GM12878 (cell line): ENCODE measurements at regions of chr7 and their contacts with region 1.

Region 1: DNA sequence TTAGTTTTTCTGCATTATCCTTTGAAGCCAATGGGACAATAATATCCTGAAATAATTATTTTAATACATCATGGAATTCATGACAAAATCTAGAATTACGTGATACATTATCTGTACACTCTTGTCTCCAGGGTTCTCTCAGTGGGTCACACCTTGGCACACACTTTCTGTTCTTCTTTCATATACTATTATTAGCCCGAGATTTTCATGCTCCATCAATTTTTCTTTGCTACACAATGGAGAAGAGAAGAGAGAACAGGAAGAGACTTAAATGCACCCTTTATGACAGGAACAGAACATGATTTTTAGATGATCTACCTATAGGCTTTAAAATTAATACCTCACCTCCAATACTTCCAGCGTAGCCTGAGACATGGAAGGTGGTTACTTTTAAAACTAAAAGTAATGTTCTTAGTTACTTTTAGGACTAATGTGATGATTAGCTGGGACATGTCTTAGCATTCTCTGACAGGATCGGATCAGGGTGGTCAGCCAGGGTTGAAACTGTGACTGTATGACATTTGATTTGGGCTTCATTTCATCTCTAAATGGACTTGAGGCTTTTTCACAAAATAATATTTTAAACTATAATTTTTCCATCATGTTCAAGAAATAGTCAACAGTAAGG is 148.2 kb upstream of the WNT16 start:
- DNase-seq: peak; percentile 79
- ATAC-seq: peak; percentile 98
- H3K4me3 ChIP-seq: no peak overlapping the region
- H3K27ac ChIP-seq: peak overlapping the region; percentile 62
- H3K4me1 ChIP-seq: peaks cover 11% of the 10 kb centered on the region
- H3K27me3 ChIP-seq: no peaks in the 10 kb centered on the region
- CTCF ChIP-seq: no peak
- EP300 ChIP-seq: peak; percentile 90 to 93; a peak in 3 of 4 replicates
- POLR2A ChIP-seq: no peak
- RAD21 ChIP-seq: no peak

Region 2: DNA sequence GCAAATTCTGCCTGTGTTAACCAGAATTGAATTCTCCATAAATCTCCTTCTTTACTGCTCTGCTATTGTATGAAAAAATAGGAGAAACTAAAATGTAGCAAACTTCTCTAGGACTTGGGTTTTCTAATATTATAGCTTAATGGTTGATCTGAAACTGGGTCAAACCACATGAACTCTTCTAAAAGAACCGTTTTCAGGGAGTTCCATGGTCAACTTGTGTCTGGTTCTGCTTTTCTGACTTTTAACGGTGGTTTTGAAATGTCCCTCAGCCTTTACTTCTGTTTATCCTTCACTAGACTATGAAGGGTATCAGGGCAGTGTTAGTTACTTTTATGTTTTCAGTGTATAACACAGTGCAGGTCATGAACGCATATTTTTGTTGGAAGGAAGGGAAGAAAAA is 564.8 kb before region 1 on chr7:
- CTCF ChIA-PET with region 1: no interaction called
- POLR2A ChIA-PET with region 1: interaction called, 13 read pairs
- RAD21 ChIA-PET with region 1: no interaction called
- SMC1A ChIA-PET with region 1: no interaction called
- in situ Hi-C with region 1: no loop called
- intact Hi-C with region 1: no loop called
- DNase-seq: peak; percentile 17
- ATAC-seq: peak; percentile 89
- H3K4me3 ChIP-seq: no peak overlapping the region
- H3K27ac ChIP-seq: no peak overlapping the region
- H3K4me1 ChIP-seq: peaks cover 10% of the 10 kb centered on the region
- H3K27me3 ChIP-seq: no peaks in the 10 kb centered on the region
- CTCF ChIP-seq: no peak
- EP300 ChIP-seq: peak in 1 of 2 experiments; percentile 40; a peak in 1 of 4 replicates
- POLR2A ChIP-seq: no peak
- RAD21 ChIP-seq: no peak

Region 3: GRCh38 chr7:121163699-121164098 is 16.9 kb before region 1 on chr7:
- CTCF ChIA-PET with region 1: interaction called, 10 read pairs
- POLR2A ChIA-PET with region 1: no interaction called
- RAD21 ChIA-PET with region 1: interaction called, 3 read pairs
- SMC1A ChIA-PET with region 1: interaction called, 10 read pairs
- in situ Hi-C with region 1: no loop called
- intact Hi-C with region 1: no loop called
- DNase-seq: no peak
- ATAC-seq: peak; percentile 66
- H3K4me3 ChIP-seq: no peak overlapping the region
- H3K27ac ChIP-seq: no peak overlapping the region
- H3K4me1 ChIP-seq: no peaks in the 10 kb centered on the region
- H3K27me3 ChIP-seq: no peaks in the 10 kb centered on the region
- CTCF ChIP-seq: peak in 1 of 3 experiments; percentile 34; a peak in 1 of 6 replicates
- EP300 ChIP-seq: no peak
- POLR2A ChIP-seq: no peak
- RAD21 ChIP-seq: peak; percentile 46; the same call in 1 of the 2 replicates

Region 4: GRCh38 chr7:121302214-121302745 is 121.7 kb after region 1 on chr7:
- CTCF ChIA-PET with region 1: no interaction called
- POLR2A ChIA-PET with region 1: no interaction called
- RAD21 ChIA-PET with region 1: interaction called, 3 read pairs
- SMC1A ChIA-PET with region 1: interaction called, 3 read pairs
- in situ Hi-C with region 1: no loop called
- intact Hi-C with region 1: loop called (anchors 2 kb)
- DNase-seq: no peak
- ATAC-seq: peak; percentile 97
- H3K4me3 ChIP-seq: no peak overlapping the region
- H3K27ac ChIP-seq: no peak overlapping the region
- H3K4me1 ChIP-seq: peaks cover 29% of the 10 kb centered on the region
- H3K27me3 ChIP-seq: no peaks in the 10 kb centered on the region
- CTCF ChIP-seq: no peak
- EP300 ChIP-seq: peak in 1 of 2 experiments; percentile 67; a peak in 1 of 4 replicates
- POLR2A ChIP-seq: no peak
- RAD21 ChIP-seq: no peak

Region 5: DNA sequence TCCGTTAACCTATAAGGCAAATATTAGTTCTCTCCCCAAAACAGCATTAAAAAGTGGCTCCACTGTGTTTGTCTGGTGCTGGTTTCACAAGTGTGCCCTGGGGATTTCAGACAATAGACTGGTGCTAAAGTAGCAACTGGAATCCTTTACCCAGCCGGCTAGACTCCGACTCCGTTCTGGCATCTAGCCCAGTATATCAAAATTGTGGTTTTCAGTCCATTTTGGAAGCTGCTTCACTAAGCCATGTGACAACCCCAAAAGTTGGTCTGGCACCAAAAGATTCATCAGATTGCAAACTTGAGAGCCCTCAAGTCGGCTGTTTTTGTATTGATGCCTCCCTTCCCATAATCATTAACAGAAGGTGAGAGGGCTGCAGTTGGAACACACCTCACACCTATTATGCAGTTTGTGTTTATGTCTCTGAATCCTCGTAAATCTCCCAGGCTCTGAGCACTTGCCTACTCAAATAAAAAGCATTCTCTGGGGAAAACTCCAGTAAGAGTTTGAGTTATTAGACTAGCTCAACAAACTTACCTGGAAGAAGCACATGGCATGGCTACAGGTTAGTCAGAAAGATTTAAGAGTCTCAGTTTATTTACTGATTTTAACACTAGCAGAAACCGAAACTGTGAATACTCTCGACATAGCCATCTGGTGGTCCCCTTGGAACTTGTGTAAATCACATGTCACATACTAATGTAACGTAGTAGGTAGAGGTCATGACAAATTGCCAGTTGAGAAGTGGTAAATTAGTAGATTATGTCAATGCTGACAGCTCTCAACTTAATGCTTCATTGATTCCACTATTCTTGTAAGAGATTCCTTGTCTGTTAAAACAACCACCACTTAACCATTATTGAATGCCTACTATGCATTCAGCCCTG is 133.5 kb after region 1 on chr7:
- CTCF ChIA-PET with region 1: interaction called, 3 read pairs
- POLR2A ChIA-PET with region 1: no interaction called
- RAD21 ChIA-PET with region 1: no interaction called
- SMC1A ChIA-PET with region 1: interaction called, 12 read pairs
- in situ Hi-C with region 1: no loop called
- intact Hi-C with region 1: no loop called
- DNase-seq: peak; percentile 50
- ATAC-seq: peak; percentile 91
- H3K4me3 ChIP-seq: no peak overlapping the region
- H3K27ac ChIP-seq: no peak overlapping the region
- H3K4me1 ChIP-seq: peaks cover 12% of the 10 kb centered on the region
- H3K27me3 ChIP-seq: no peaks in the 10 kb centered on the region
- CTCF ChIP-seq: no peak
- EP300 ChIP-seq: peak; percentile 74 to 85; a peak in 3 of 4 replicates
- POLR2A ChIP-seq: no peak
- RAD21 ChIP-seq: 0 out of 2 replicates have a peak, but pooled peaks have one; percentile 12